Naive thymus-derived CD8-positive, alpha-beta T cell (primary cell): ENCODE measurements at regions of chr14 and their contacts with region 1.

Region 1: DNA sequence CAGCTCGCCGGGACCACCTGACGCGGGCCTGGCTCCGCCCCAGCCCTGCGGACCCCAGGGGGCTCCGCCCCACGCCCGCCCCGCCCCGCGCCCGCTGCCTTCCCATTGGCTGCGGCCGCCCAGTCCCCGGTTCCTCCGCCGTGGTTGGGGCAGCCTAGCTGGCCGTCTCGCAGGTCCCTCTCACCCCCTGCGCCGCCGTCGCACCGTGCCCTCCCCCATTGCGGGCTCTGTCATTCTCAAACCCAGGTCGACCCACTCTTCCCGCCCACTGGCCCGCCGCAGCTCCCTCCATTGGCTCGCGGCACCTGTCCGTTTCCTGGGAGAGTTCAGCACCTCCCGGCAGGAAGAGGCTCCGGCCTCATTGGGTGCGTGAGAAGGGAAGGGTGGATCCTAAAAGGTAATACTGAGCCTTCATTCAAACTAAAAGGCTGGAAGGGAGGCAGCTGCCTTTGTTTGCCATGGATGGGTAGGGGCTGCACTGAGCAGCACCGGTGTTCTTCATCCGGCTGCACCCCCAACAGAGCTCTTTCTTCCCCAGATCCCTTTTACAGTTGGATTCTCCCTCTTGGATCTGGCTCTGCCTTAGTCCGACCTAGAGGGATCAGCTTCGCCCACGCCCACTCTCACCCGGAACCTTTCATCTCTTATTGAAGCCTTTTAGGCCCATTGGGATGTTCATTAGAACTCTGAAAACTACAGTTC is 381 bp upstream of the MAP3K9 start:
- DNase-seq: peak; percentile 69 to 93 (median 84)
- ATAC-seq: peak; percentile 82 to 83
- H3K4me3 Mint-ChIP-seq: no peak overlapping the region
- H3K27ac Mint-ChIP-seq: peak overlapping the region in 7 of 10 donors; percentile 55 to 93 (median 88)
- H3K4me1 Mint-ChIP-seq: peaks cover 11 to 14% (median 12%) of the 10 kb centered on the region in 4 donors
- H3K27me3 Mint-ChIP-seq: peaks cover 0 to 6% (median 0%) of the 10 kb centered on the region in 5 donors

Region 2: DNA sequence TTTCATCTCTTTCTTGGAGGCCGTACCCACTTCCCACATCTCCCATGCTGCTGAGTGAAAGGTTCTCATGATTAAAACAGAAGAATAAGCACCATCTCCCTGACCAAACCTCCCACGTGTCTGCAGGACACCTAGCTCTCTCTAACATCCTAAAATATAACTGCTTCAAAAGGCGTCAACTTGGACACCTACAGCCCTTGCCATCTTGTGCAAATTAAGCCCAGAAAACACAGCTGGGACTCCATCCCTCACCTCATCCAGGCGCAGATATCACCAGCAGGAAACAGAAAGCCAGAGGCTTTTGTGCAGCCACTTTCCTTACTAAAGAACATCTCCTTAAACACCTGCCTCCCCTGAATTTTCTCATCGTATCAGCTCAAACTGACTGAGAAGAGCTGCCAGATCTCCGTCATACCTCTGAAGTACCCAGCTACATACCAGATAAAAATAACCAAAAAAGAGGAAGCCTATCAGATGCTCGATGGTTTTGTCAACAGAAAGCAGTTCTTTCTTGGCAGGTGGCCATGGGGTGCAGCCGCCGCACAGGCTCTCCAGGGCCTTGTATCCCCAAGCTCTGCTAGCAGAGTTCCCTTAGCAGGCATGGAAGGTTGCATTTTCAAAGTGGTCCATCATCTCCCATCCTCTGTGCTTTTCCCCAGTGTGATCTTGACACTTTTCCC is 29.2 kb before region 1 on chr14:
- POLR2A ChIA-PET with region 1: interaction called, 10 read pairs
- DNase-seq: peak in 4 of 10 donors; percentile 19 to 51 (median 27)
- ATAC-seq: peak; percentile 68 to 74
- H3K4me3 Mint-ChIP-seq: peak overlapping the region in 6 of 10 donors; percentile 9 to 60 (median 28)
- H3K27ac Mint-ChIP-seq: peak overlapping the region in 7 of 10 donors; percentile 1 to 84 (median 74)
- H3K4me1 Mint-ChIP-seq: peaks cover 12 to 37% (median 34%) of the 10 kb centered on the region in 4 donors
- H3K27me3 Mint-ChIP-seq: no peaks in the 10 kb centered on the region

Region 3: DNA sequence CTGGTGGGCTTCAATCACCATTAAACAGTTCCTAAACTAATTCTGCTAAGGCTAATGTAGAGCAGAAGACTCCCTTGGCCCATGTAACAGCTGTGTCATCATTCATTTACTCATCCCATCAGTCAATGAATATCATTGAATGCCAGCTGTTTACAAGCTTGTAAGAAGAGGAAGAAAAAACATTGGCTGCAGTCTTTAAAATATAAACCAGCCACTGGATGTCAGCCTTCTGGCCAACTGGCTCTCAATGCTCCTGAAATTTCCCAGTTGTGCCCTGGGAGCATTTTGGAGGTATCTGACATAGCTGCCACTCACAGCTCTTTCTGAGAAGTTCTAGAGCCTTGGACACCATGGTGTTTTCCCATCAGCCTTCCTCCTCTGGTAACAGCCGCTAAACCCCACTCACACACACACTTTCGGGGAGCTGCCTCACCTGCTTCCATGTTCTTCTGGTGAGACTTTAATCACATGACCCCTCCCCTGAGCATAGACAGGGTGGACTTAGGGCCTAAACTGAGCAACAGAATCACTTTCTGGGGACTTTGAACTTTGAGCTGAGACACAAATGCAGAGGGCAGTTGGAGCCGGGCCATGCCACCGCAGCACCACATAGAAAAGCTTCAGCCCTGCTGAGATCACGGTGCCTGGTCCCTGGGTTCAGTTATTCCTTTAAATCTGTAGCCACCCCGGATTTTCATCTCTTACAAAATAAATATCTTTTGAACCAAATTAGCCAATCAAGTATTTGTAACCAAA is 17.9 kb after region 1 on chr14:
- POLR2A ChIA-PET with region 1: no interaction called
- DNase-seq: no peak
- ATAC-seq: no peak
- H3K4me3 Mint-ChIP-seq: no peak overlapping the region
- H3K27ac Mint-ChIP-seq: no peak overlapping the region
- H3K4me1 Mint-ChIP-seq: peaks cover 6 to 11% (median 8%) of the 10 kb centered on the region in 4 donors
- H3K27me3 Mint-ChIP-seq: peaks cover 0 to 18% (median 0%) of the 10 kb centered on the region in 5 donors